Ovary (tissue), 10 donors: ENCODE measurements at regions of chr11 and their contacts with region 1.

Region 1: GRCh38 chr11:35030716-35031213 is 108.2 kb upstream of the CD44 start:
- DNase-seq: peak in 1 of 5 donors; percentile 32
- H3K4me3 ChIP-seq: no peak overlapping the region
- H3K27ac ChIP-seq: no peak overlapping the region
- H3K4me1 ChIP-seq: no peaks in the 10 kb centered on the region
- H3K27me3 ChIP-seq: no peaks in the 10 kb centered on the region
- CTCF ChIP-seq: no peak
- EP300 ChIP-seq: no peak
- POLR2A ChIP-seq: no peak

Region 2: GRCh38 chr11:35077709-35078469 is 47.1 kb after region 1 on chr11:
- intact Hi-C with region 1: loop called in 1 of 4 experiments (anchors 5 kb)
- DNase-seq: no peak
- H3K4me3 ChIP-seq: no peak overlapping the region
- H3K27ac ChIP-seq: no peak overlapping the region
- H3K4me1 ChIP-seq: peaks cover 3% of the 10 kb centered on the region
- H3K27me3 ChIP-seq: no peaks in the 10 kb centered on the region
- CTCF ChIP-seq: no peak
- EP300 ChIP-seq: no peak
- POLR2A ChIP-seq: no peak

Region 3: GRCh38 chr11:35785287-35786167 is 754.8 kb after region 1 on chr11:
- intact Hi-C with region 1: no loop called
- DNase-seq: no peak
- H3K4me3 ChIP-seq: no peak overlapping the region
- H3K27ac ChIP-seq: no peak overlapping the region
- H3K4me1 ChIP-seq: peaks cover 12% of the 10 kb centered on the region
- H3K27me3 ChIP-seq: no peaks in the 10 kb centered on the region
- CTCF ChIP-seq: no peak
- EP300 ChIP-seq: no peak
- POLR2A ChIP-seq: no peak